K562 (cell line): ENCODE measurements at regions of chr16 and their contacts with region 1.

Region 1: GRCh38 chr16:6643080-6643686 is 689.5 kb upstream of the RBFOX1 start:
- DNase-seq: peak; percentile 16 to 58 (median 32)
- ATAC-seq: no peak
- H3K4me3 ChIP-seq: no peak overlapping the region
- H3K27ac ChIP-seq: no peak overlapping the region
- H3K4me1 ChIP-seq: no peaks in the 10 kb centered on the region
- H3K27me3 ChIP-seq: peaks cover 11 to 14% of the 10 kb centered on the region in 2 experiments; a peak in 4 of 5 replicates
- CTCF ChIP-seq: peak; percentile 55 to 86 (median 74); a peak in 5 of 6 replicates
- EP300 ChIP-seq: no peak
- POLR2A ChIP-seq: no peak
- RAD21 ChIP-seq: peak; percentile 69 to 85

Region 2: GRCh38 chr16:5490499-5490898 is 1152.7 kb before region 1 on chr16:
- CTCF ChIA-PET with region 1: no interaction called
- POLR2A ChIA-PET with region 1: no interaction called
- in situ Hi-C with region 1: loop called (anchors 10 kb)
- intact Hi-C with region 1: no loop called
- DNase-seq: peak; percentile 59 to 77 (median 73)
- ATAC-seq: peak; percentile 78
- H3K4me3 ChIP-seq: no peak overlapping the region
- H3K27ac ChIP-seq: no peak overlapping the region
- H3K4me1 ChIP-seq: peaks cover 0 to 3% of the 10 kb centered on the region in 2 experiments; a peak in 1 of 5 replicates
- H3K27me3 ChIP-seq: no peaks in the 10 kb centered on the region
- CTCF ChIP-seq: peak; percentile 79 to 95 (median 85)
- EP300 ChIP-seq: no peak
- POLR2A ChIP-seq: no peak
- RAD21 ChIP-seq: peak; percentile 26 to 76

Region 3: DNA sequence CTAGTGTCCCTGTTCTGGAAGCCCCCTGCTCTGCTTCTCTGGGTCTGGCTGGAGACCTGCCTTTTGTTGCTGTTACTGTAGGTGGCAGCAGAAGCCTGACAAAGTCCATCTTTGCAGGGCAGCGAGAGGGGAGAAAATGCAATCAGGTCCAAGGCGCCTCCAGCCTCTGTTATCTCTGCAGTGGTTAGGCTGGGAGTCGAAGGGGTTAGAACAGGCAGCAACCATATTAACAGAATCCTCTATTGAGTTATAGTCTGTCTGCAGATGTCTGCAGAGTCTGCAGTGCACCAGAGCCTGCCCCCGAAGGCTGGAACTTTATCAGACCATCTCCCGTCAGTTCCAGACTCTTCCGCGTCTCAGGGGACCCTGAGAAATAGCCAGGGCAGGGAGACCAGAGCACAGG is 1140.7 kb before region 1 on chr16:
- CTCF ChIA-PET with region 1: interaction called, 3 read pairs
- POLR2A ChIA-PET with region 1: no interaction called
- in situ Hi-C with region 1: loop called (anchors 10 kb)
- intact Hi-C with region 1: loop called (anchors 5 kb)
- DNase-seq: peak; percentile 34 to 55 (median 43)
- ATAC-seq: peak; percentile 86
- H3K4me3 ChIP-seq: no peak overlapping the region
- H3K27ac ChIP-seq: no peak overlapping the region
- H3K4me1 ChIP-seq: no peaks in the 10 kb centered on the region
- H3K27me3 ChIP-seq: no peaks in the 10 kb centered on the region; a peak in 1 of 5 replicates
- CTCF ChIP-seq: peak; percentile 62 to 69 (median 68)
- EP300 ChIP-seq: no peak
- POLR2A ChIP-seq: no peak
- RAD21 ChIP-seq: peak; percentile 40 to 68

Region 4: DNA sequence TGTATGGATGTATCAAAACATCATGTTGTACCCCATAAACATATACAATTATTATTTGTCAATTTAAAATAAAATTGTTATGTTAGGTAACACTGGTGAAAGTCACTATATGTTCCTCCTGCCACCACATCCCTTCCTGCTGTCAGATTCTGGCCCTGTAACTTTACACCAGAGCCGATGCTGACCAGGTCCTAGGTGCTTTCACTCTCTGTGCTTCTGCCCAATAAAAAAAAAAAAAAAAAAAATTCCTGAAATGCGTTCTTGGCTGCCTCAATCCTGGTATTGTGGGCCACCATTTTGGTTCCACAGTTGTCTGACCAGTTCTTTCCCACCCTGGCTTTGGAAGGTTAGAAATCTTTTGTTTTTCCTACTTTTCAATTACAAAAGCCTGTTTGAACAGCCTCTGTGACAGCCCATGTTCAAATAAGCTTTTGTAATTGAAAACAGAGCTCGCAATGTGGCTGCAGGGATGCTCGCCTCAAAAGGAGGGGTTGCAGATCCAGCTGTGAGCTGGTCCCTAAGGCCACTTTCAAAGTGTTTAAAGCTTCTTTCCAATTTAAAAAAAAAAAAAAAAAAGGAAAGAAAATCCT is 714.6 kb before region 1 on chr16:
- CTCF ChIA-PET with region 1: no interaction called
- POLR2A ChIA-PET with region 1: no interaction called
- in situ Hi-C with region 1: no loop called
- intact Hi-C with region 1: loop called (anchors 10 kb)
- DNase-seq: no peak
- ATAC-seq: no peak
- H3K4me3 ChIP-seq: no peak overlapping the region
- H3K27ac ChIP-seq: no peak overlapping the region
- H3K4me1 ChIP-seq: no peaks in the 10 kb centered on the region
- H3K27me3 ChIP-seq: no peaks in the 10 kb centered on the region
- CTCF ChIP-seq: no peak
- EP300 ChIP-seq: no peak
- POLR2A ChIP-seq: no peak
- RAD21 ChIP-seq: no peak

Region 5: GRCh38 chr16:6016530-6017184 is 626.5 kb before region 1 on chr16:
- CTCF ChIA-PET with region 1: no interaction called
- POLR2A ChIA-PET with region 1: no interaction called
- in situ Hi-C with region 1: no loop called
- intact Hi-C with region 1: loop called (anchors 10 kb)
- DNase-seq: peak; percentile 56 to 65 (median 62)
- ATAC-seq: peak; percentile 67; the same call in 1 of the 3 replicates
- H3K4me3 ChIP-seq: no peak overlapping the region
- H3K27ac ChIP-seq: no peak overlapping the region
- H3K4me1 ChIP-seq: no peaks in the 10 kb centered on the region
- H3K27me3 ChIP-seq: peaks cover 0 to 31% of the 10 kb centered on the region in 2 experiments; a peak in 1 of 5 replicates
- CTCF ChIP-seq: peak in 2 of 3 experiments; percentile 51 to 67; a peak in 4 of 6 replicates
- EP300 ChIP-seq: no peak
- POLR2A ChIP-seq: no peak
- RAD21 ChIP-seq: peak in 1 of 2 experiments; percentile 55; a peak in 2 of 4 replicates

Region 6: GRCh38 chr16:6232056-6232455 is 411.1 kb before region 1 on chr16:
- CTCF ChIA-PET with region 1: no interaction called
- POLR2A ChIA-PET with region 1: no interaction called
- in situ Hi-C with region 1: no loop called
- intact Hi-C with region 1: no loop called
- DNase-seq: no peak
- ATAC-seq: no peak
- H3K4me3 ChIP-seq: no peak overlapping the region
- H3K27ac ChIP-seq: no peak overlapping the region
- H3K4me1 ChIP-seq: no peaks in the 10 kb centered on the region
- H3K27me3 ChIP-seq: no peaks in the 10 kb centered on the region; a peak in 1 of 5 replicates
- CTCF ChIP-seq: no peak
- EP300 ChIP-seq: no peak
- POLR2A ChIP-seq: no peak
- RAD21 ChIP-seq: no peak